PC-9 (cell line): ENCODE measurements at regions of chr17 and their contacts with region 1.

Region 1: GRCh38 chr17:5592382-5592781 is 8.1 kb upstream of the NLRP1 start:
- DNase-seq: no peak
- H3K4me3 ChIP-seq: no peak overlapping the region
- H3K27ac ChIP-seq: no peak overlapping the region
- H3K4me1 ChIP-seq: no peaks in the 10 kb centered on the region
- H3K27me3 ChIP-seq: peaks cover 4% of the 10 kb centered on the region; the same call in 1 of the 2 replicates
- CTCF ChIP-seq: peak; percentile 83

Region 2: DNA sequence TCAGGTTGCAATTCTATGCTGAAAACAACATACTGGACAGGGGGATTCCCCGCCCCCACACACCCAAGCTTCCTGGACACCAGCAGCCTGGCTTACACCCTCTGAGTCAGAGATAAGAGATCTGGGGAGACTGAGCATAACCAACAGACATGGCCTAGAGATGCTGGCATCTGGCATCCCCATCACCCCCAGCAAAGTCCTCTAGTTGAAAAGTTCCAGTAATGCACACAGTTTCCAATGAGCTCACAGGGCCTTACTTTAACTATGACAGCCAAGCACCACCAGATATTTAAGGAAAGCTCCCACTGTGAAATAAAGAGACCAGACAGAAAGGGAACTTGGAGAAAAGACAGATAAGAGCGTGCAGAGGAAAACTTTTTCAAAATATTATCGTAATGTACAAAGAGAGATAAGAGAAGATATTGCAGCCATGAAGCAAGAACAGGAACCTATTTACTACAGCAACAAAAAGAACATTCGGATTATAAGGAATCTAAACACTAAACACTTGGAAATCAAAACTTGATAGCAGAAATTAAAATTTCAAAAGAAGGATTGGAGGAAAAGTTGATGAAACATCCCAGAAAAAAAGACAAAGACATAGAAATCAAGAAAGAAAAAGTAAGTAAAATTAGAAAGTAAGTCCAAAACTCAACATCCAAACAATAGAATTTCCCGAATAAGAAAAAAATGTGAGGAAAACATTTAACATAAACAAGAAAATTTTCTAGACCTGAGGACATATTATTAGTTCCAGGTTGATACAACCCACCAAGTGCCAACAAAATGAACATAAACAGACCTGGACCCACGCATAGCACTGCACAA is 933.7 kb before region 1 on chr17:
- CTCF ChIA-PET with region 1: no interaction called
- POLR2A ChIA-PET with region 1: no interaction called
- intact Hi-C with region 1: no loop called
- DNase-seq: no peak
- H3K4me3 ChIP-seq: no peak overlapping the region
- H3K27ac ChIP-seq: no peak overlapping the region
- H3K4me1 ChIP-seq: no peaks in the 10 kb centered on the region
- H3K27me3 ChIP-seq: 0 out of 2 replicates have a peak, but pooled peaks cover 9% of the 10 kb centered on the region
- CTCF ChIP-seq: no peak

Region 3: DNA sequence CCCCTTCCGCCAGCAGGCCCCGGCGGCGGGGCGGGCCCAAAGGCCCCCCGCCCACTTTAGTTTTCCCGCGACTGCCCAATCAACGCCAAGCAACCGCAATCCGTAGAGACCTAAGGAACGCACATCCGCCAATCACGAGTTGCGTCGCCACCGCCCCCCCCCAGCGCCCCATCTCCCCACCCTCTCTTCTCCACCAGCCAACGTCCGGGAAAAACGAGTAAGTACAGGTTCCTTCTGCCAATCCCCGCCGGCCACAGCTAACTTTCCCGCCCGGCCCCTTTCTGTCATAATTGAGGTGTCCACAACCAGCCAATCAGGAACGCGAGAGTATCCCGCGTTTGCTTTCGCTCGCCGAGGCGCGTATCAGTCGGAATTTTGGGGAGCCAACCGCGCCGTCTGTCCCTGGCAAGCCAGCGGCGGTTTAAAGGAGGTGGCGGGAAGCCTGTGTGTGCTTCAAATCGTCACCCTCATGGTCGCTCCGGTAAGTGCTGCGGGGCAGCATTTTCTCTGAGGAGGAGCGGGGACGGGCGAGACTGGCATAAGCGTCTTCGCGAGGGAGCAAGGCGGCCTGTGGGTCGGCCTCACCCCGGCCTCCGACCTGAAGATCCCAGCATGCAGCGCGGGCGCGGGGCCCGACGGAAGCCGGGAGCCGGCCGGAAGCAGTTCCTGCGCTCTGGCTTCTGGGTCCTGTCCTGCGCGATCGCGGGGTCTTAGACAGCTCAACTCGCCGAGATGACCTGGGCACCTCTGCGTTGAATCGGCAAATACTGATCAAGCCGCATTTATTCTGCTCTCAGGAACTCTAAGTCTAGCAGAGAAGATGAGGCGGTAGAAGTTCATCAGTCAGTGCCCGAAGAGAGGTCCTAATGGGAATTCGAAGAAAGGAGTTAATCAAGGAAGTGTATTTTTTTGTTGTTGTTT is 105.9 kb before region 1 on chr17 and contains the start of gene MIS12:
- CTCF ChIA-PET with region 1: no interaction called
- POLR2A ChIA-PET with region 1: no interaction called
- intact Hi-C with region 1: no loop called
- DNase-seq: peak; percentile 97 to 98
- H3K4me3 ChIP-seq: peak within 1 kb of the TSS; percentile 92
- H3K27ac ChIP-seq: peak within 1 kb of the TSS; percentile 91
- H3K4me1 ChIP-seq: peaks cover 16% of the 10 kb centered on the region; the same call in 1 of the 2 replicates
- H3K27me3 ChIP-seq: no peaks in the 10 kb centered on the region
- CTCF ChIP-seq: no peak
- total RNA-seq, gene MIS12: 19.5 and 20.3 TPM in 2 replicates

Region 4: GRCh38 chr17:6413065-6413464 is 820.7 kb after region 1 on chr17:
- CTCF ChIA-PET with region 1: interaction called, 10 read pairs
- POLR2A ChIA-PET with region 1: no interaction called
- intact Hi-C with region 1: no loop called
- DNase-seq: no peak
- H3K4me3 ChIP-seq: no peak overlapping the region
- H3K27ac ChIP-seq: no peak overlapping the region
- H3K4me1 ChIP-seq: no peaks in the 10 kb centered on the region
- H3K27me3 ChIP-seq: peaks cover 100% of the 10 kb centered on the region
- CTCF ChIP-seq: peak; percentile 71

Region 5: DNA sequence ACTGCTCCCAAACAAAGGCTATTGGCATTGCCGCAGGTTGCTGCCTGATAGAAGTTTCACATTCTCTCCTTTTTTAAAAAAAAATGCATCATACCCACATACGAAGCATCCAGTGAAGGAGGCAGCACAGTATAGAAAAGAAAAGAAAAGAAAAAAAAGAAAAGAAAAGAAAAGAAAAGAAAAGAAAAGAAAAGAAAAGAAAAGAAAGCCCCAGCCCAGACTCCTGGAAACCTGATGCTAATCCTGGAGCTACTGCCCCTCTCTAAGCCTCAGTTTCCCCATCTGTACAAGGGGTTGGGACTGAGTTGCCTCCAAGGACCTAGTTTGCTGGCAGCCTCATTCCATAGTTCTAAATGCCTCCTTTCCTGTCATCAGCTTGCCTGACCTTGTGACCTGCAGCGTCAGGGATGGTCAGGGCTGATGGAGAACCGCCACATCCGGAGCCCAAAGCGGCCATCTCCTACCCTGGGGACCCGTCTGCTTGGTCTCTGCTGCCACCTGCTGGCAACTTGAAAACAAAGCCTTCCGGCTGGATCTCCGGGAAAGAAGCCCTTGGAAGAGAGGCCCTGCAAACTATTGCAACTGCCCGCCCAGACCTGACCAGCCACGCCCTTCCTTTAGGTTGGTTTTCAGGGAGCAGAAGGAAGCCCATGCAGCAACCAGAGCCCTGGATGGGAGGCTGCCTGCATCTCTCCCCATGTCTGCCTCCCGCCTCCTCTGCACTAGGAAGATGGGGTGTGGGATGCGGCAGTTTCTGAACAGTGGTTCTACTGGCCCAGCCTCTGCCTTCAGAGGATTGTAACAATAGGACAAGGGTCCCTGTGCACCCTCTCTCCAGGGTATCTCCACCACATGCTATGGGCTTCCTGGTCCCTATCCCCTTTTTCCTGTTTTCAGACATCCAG is 829.6 kb after region 1 on chr17:
- CTCF ChIA-PET with region 1: interaction called, 3 read pairs
- POLR2A ChIA-PET with region 1: no interaction called
- intact Hi-C with region 1: loop called (anchors 1 kb)
- DNase-seq: peak; percentile 58 to 83
- H3K4me3 ChIP-seq: no peak overlapping the region
- H3K27ac ChIP-seq: no peak overlapping the region
- H3K4me1 ChIP-seq: no peaks in the 10 kb centered on the region
- H3K27me3 ChIP-seq: peaks cover 84% of the 10 kb centered on the region
- CTCF ChIP-seq: peak; percentile 95